Common myeloid progenitor, CD34-positive (primary cell): ENCODE measurements at regions of chr4 and their contacts with region 1.

Region 1: DNA sequence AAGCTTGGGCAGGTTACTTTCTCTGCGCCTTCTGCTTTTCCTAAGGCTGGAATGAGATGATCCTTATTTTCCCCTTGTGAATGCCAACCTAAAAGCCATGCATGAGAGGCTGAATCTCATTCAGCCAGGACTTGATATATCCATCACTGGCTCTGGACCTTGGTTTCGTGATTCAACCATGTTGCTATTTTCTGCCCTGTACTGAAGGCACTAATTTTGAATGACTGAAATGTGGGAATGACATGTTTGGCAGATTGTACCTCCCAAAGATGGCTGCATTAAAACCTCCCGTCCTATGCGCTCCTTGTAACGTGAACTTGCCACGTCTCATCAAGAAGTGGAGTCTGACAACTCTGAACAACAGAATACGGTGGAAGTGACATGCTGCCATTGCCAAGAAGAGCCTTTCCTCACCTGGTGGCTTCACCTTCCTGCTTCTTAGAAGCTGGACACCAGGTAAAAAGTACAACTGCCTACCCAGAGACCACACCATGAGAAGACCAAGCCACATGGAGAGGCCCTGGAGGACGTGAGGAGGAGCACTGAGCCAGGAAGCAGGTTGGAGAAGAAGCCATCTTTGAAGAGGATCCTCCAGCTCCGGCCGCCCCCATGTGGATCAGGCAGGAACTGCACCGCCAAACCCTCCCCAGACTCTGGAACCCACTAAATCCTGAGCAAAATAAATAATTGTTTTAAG is 174.5 kb downstream of the NSUN7 start:
- DNase-seq: peak; percentile 35 to 70 (median 65)
- H3K4me3 ChIP-seq: peak overlapping the region in 1 of 7 experiments; percentile 28
- H3K27ac ChIP-seq: no peak overlapping the region
- H3K4me1 ChIP-seq: peaks cover 0 to 1% (median 0%) of the 10 kb centered on the region in 4 experiments
- H3K27me3 ChIP-seq: no peaks in the 10 kb centered on the region

Region 2: DNA sequence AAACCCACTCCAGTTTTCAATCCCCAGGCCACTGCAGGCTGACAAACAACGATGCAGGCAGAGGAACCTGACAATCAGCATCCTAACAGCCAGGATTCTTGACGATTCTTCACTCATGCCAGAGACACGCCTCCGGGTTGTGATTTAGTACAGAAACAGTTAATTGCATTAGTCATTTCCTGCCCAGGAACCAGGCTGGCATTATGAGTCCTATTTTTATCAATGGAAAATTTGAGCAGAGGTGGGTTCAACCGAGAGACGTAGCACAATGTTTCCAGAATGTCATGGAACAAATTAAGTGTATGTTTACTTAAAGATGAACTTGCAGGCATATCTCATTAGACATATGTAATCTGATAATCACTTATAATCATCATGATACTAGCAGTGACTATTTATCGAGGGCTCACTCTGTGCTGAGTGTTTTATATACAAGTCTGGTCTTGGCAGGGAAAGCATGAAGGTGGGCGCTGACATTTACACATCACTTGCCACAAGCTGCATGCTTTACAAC is 14.8 kb before region 1 on chr4:
- CTCF ChIA-PET with region 1: interaction called, 46 read pairs
- POLR2A ChIA-PET with region 1: no interaction called
- DNase-seq: peak; percentile 32 to 84 (median 70)
- H3K4me3 ChIP-seq: peak overlapping the region in 1 of 7 experiments; percentile 23
- H3K27ac ChIP-seq: no peak overlapping the region
- H3K4me1 ChIP-seq: peaks cover 4 to 18% (median 11%) of the 10 kb centered on the region in 4 experiments
- H3K27me3 ChIP-seq: no peaks in the 10 kb centered on the region

Region 3: DNA sequence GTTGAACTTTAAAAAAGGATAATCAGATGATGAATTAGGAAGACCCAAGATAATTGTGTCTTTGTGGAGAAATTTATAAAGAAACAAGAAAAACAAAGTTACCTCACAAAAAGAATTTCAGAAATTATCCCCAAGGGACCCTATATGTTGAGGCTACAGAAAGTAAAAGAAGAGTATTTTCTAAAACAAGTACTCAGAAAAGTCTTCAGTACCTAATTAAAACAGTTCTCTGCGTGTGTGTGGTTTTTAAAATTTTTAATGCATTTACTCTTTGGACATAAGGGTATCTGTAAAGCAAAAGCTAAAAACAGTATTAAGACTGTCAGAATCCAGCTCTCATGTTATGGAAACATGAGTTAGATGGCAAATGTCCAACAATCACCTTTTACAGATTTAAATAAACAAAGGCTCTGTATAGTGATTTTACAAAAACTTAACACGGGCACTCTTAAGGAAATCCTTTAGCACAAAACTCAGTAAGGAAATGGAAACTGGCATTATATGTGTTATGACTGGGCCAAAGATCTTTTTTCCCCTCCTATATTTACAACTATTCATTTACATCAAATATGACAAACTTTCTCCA is 13.0 kb after region 1 on chr4:
- CTCF ChIA-PET with region 1: interaction called, 17 read pairs
- POLR2A ChIA-PET with region 1: no interaction called
- DNase-seq: no peak
- H3K4me3 ChIP-seq: no peak overlapping the region
- H3K27ac ChIP-seq: no peak overlapping the region
- H3K4me1 ChIP-seq: no peaks in the 10 kb centered on the region
- H3K27me3 ChIP-seq: no peaks in the 10 kb centered on the region

Region 4: GRCh38 chr4:41060352-41061334 is 136.4 kb after region 1 on chr4:
- CTCF ChIA-PET with region 1: no interaction called
- POLR2A ChIA-PET with region 1: no interaction called
- DNase-seq: no peak
- H3K4me3 ChIP-seq: no peak overlapping the region
- H3K27ac ChIP-seq: no peak overlapping the region
- H3K4me1 ChIP-seq: no peaks in the 10 kb centered on the region
- H3K27me3 ChIP-seq: no peaks in the 10 kb centered on the region